Activated T-helper 1 cell treated with anti-CD3 and anti-CD28 coated beads, Interleukin-12 subunit alpha, Interleukin-12 subunit beta, Interleukin-2, Interleukin-4 antibody, amounts not matched to agents 30 ng/mL and 10 ng/mL and 1 ng/mL, durations not matched to agents 14 hours and 24 hours and 36 hours (primary cell): ENCODE measurements at regions of chr7 and their contacts with region 1.

Region 1: DNA sequence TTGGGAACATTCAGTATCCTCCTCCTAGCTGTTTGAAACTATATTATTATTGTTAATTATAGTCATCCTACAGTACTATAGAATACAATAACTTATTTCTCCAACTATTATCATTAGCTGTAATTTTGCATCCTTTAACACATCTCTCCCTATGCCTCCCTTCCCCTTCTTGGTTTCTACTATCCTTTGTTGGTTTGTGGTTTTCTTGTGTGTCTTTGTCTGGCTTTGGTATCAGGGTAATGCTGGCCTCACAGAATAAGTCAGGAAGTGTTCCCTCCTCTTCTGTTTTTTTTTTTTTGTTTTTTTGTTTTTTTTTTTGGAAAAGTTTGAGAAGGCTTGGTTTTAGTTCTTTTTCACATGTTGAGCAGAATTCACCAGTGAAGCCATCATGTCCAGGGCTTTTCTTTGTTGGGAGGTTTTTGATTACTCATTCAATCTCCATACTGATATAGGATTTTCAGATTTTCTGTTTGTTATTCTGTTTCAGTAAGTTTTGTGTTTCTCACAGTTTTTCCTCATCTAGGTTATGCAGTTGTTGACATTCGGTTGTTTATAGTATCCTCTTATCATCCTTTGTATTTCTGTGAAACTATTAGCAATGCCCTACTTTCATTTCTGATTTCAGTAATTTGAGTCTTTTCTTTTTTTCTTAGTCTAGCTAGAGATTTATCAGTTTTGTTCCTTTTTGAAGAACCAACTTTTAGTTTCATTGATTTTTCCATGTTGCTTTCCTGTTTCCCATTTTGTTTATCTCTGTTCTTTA is 21.6 kb downstream of the C1GALT1 start:
- DNase-seq: no peak
- H3K4me3 Mint-ChIP-seq: peak overlapping the region; percentile 61
- H3K27ac Mint-ChIP-seq: peak overlapping the region; percentile 59
- H3K4me1 Mint-ChIP-seq: peaks cover 72% of the 10 kb centered on the region
- H3K27me3 Mint-ChIP-seq: no peaks in the 10 kb centered on the region

Region 2: DNA sequence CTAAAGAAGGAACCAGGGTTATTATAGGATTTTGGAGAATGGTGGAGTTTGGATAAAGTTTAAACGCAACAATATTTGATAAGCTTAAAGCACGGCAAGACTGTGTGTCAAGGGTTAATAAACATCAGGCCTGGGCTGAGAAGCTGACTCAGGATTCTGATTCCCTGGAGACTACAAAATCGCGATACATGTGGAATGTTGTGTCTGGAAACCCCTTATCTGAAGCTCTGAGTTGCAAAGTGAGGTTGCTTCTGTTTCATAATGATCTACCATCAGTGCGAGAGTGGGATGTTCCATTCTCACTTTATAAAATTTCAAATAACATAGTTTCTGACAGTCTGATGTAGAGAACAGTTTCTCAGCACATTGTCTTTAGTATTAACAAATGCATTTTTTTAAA is 13.9 kb before region 1 on chr7:
- intact Hi-C with region 1: loop called (anchors 1 kb)
- DNase-seq: no peak
- H3K4me3 Mint-ChIP-seq: no peak overlapping the region
- H3K27ac Mint-ChIP-seq: no peak overlapping the region
- H3K4me1 Mint-ChIP-seq: peaks cover 35% of the 10 kb centered on the region
- H3K27me3 Mint-ChIP-seq: no peaks in the 10 kb centered on the region